ENCODE measurements at regions of chr10 and their contacts with region 1.

Region 1: GRCh38 chr10:112949875-112950507 is at the start of gene TCF7L2:
- DNase-seq: peak; percentile 97 to 98
- ATAC-seq: peak; percentile 94
- H3K4me3 ChIP-seq: peak within 1 kb of the TSS; percentile 76 to 98
- H3K27ac ChIP-seq: peak within 1 kb of the TSS; percentile 97 to 100
- H3K4me1 ChIP-seq: peaks cover 0 to 7% of the 10 kb centered on the region in 2 donors
- H3K27me3 ChIP-seq: no peaks in the 10 kb centered on the region
- total RNA-seq, gene TCF7L2: 45.1 to 57.8 TPM

Region 2: GRCh38 chr10:112811740-112812551 is 138.0 kb before region 1 on chr10:
- intact Hi-C with region 1: loop called in 1 of 2 experiments (anchors 10 kb)
- DNase-seq: peak; percentile 87 to 88
- ATAC-seq: peak; percentile 85
- H3K4me3 ChIP-seq: no peak overlapping the region
- H3K27ac ChIP-seq: peak overlapping the region in 1 of 2 donors; percentile 39
- H3K4me1 ChIP-seq: no peaks in the 10 kb centered on the region
- H3K27me3 ChIP-seq: no peaks in the 10 kb centered on the region

Region 3: GRCh38 chr10:112886463-112886862 is 63.5 kb before region 1 on chr10:
- intact Hi-C with region 1: no loop called
- DNase-seq: no peak
- ATAC-seq: no peak
- H3K4me3 ChIP-seq: no peak overlapping the region
- H3K27ac ChIP-seq: no peak overlapping the region
- H3K4me1 ChIP-seq: no peaks in the 10 kb centered on the region
- H3K27me3 ChIP-seq: no peaks in the 10 kb centered on the region

Region 4: GRCh38 chr10:113000876-113001598 is 51.0 kb after region 1 on chr10:
- intact Hi-C with region 1: loop called in 1 of 2 experiments (anchors 10 kb)
- DNase-seq: no peak
- ATAC-seq: peak; percentile 39
- H3K4me3 ChIP-seq: no peak overlapping the region
- H3K27ac ChIP-seq: peak overlapping the region in 1 of 2 donors; percentile 67
- H3K4me1 ChIP-seq: peaks cover 4 to 15% of the 10 kb centered on the region in 2 donors
- H3K27me3 ChIP-seq: no peaks in the 10 kb centered on the region

Region 5: GRCh38 chr10:113020838-113021237 is 70.8 kb after region 1 on chr10:
- intact Hi-C with region 1: loop called in 1 of 2 experiments (anchors 5 kb)
- DNase-seq: no peak
- ATAC-seq: peak; percentile 26
- H3K4me3 ChIP-seq: no peak overlapping the region
- H3K27ac ChIP-seq: peak overlapping the region in 1 of 2 donors; percentile 47
- H3K4me1 ChIP-seq: peaks cover 12 to 15% of the 10 kb centered on the region in 2 donors
- H3K27me3 ChIP-seq: no peaks in the 10 kb centered on the region

Region 6: DNA sequence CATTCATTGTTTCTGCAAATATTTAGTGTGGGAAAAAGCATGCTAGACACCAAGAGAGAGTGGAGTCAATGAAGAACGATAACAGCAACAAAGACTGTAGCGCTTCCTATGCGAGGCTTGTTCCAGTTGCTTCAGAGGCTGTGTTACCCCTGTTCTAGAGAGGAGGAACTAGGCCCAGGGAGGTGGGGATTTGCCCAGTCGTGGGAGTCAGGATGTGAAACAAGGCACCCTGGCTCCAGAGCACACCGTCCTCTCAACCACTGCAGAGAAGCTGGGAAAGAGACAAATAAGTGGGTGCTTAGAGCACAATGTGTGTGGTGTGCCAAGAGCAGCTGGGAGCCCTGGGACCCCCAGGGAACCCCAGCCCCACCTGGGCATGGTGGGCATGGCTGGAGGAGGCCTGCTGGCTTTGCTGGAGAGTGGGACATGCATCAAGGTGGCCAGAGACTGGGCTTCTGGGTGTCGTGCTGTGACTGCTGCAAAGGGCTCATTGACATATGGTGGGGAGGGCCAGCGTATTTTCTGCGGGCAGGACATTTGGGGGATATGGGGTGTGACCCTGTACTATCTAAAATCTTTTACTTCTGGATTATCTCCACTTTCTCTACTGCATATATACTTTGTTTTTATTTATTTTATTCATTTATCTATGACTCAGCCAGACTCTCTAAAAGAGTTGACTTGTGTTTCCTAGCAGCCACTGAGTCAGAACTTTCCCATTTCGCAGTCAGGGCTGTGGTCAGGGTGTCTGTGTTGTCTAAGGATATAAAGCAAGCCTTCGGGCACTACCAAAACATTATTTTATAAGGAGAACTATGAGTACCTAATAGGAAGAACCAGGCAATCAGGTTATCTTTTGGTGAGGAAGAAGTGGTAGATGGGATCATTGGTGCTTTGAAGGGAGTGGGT is 95.4 kb after region 1 on chr10:
- intact Hi-C with region 1: loop called (anchors 5 to 10 kb)
- DNase-seq: peak in 1 of 2 donors; percentile 65
- ATAC-seq: no peak
- H3K4me3 ChIP-seq: no peak overlapping the region
- H3K27ac ChIP-seq: peak overlapping the region; percentile 32 to 55
- H3K4me1 ChIP-seq: peaks cover 14 to 28% of the 10 kb centered on the region in 2 donors
- H3K27me3 ChIP-seq: no peaks in the 10 kb centered on the region

Region 7: GRCh38 chr10:113052076-113052830 is 102.3 kb after region 1 on chr10:
- intact Hi-C with region 1: loop called (anchors 5 to 10 kb)
- DNase-seq: no peak
- ATAC-seq: no peak
- H3K4me3 ChIP-seq: no peak overlapping the region
- H3K27ac ChIP-seq: peak overlapping the region; percentile 15 to 96
- H3K4me1 ChIP-seq: peaks cover 9 to 10% of the 10 kb centered on the region in 2 donors
- H3K27me3 ChIP-seq: no peaks in the 10 kb centered on the region

Region 8: GRCh38 chr10:113151190-113151666 is 201.2 kb after region 1 on chr10:
- intact Hi-C with region 1: no loop called
- DNase-seq: no peak
- ATAC-seq: no peak
- H3K4me3 ChIP-seq: no peak overlapping the region
- H3K27ac ChIP-seq: no peak overlapping the region
- H3K4me1 ChIP-seq: no peaks in the 10 kb centered on the region
- H3K27me3 ChIP-seq: no peaks in the 10 kb centered on the region